ENCODE measurements at regions of chr6 and their contacts with region 1.

Region 1: GRCh38 chr6:158704181-158704822 is 54.4 kb downstream of the SYTL3 start:
- DNase-seq: peak; percentile 64
- ATAC-seq: peak; percentile 96
- H3K4me3 ChIP-seq: peak overlapping the region; percentile 45 to 77 (median 62)
- H3K27ac ChIP-seq: no peak overlapping the region
- H3K4me1 ChIP-seq: peaks cover 26% of the 10 kb centered on the region
- H3K27me3 ChIP-seq: peaks cover 4 to 17% of the 10 kb centered on the region in 2 experiments; a peak in 3 of 5 replicates
- CTCF ChIP-seq: peak; percentile 100
- EP300 ChIP-seq: no peak
- POLR2A ChIP-seq: 0 out of 4 replicates have a peak, but pooled peaks of 1 of the 2 experiments have one; percentile 15
- RAD21 ChIP-seq: peak; percentile 97

Region 2: DNA sequence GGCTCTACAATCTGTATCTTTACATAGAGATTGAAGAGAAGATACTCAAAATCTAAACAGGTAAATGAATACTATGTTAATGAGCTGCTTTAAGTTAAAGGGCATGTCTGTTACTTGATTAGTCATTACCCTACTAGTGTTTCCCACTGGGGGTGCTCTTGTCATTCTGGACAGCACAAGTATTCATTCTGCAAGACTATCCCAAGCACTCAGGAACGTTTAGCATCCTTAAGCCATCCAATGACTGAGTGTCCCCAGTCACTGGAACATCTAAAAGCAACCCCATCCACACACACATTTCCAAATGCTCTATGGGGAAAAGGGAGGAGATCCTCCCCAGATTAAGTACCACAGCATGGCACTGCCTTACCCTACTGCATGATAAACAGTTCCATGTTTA is 89.1 kb after region 1 on chr6:
- CTCF ChIA-PET with region 1: no interaction called
- POLR2A ChIA-PET with region 1: no interaction called
- in situ Hi-C with region 1: no loop called
- intact Hi-C with region 1: loop called (anchors 5 kb)
- DNase-seq: peak; percentile 66
- ATAC-seq: peak; percentile 84
- H3K4me3 ChIP-seq: no peak overlapping the region
- H3K27ac ChIP-seq: no peak overlapping the region
- H3K4me1 ChIP-seq: peaks cover 45% of the 10 kb centered on the region
- H3K27me3 ChIP-seq: no peaks in the 10 kb centered on the region
- CTCF ChIP-seq: peak; percentile 50
- EP300 ChIP-seq: no peak
- POLR2A ChIP-seq: no peak
- RAD21 ChIP-seq: peak; percentile 64

Region 3: GRCh38 chr6:159017757-159018559 is 313.7 kb after region 1 on chr6:
- CTCF ChIA-PET with region 1: no interaction called
- POLR2A ChIA-PET with region 1: no interaction called
- in situ Hi-C with region 1: no loop called
- intact Hi-C with region 1: no loop called
- DNase-seq: no peak
- ATAC-seq: no peak
- H3K4me3 ChIP-seq: no peak overlapping the region
- H3K27ac ChIP-seq: no peak overlapping the region
- H3K4me1 ChIP-seq: no peaks in the 10 kb centered on the region
- H3K27me3 ChIP-seq: 0 out of 5 replicates have a peak, but pooled peaks cover 0 to 2% of the 10 kb centered on the region in 2 experiments
- CTCF ChIP-seq: no peak
- EP300 ChIP-seq: no peak
- POLR2A ChIP-seq: no peak
- RAD21 ChIP-seq: no peak